ENCODE measurements at regions of chr19 and their contacts with region 1.

Region 1: DNA sequence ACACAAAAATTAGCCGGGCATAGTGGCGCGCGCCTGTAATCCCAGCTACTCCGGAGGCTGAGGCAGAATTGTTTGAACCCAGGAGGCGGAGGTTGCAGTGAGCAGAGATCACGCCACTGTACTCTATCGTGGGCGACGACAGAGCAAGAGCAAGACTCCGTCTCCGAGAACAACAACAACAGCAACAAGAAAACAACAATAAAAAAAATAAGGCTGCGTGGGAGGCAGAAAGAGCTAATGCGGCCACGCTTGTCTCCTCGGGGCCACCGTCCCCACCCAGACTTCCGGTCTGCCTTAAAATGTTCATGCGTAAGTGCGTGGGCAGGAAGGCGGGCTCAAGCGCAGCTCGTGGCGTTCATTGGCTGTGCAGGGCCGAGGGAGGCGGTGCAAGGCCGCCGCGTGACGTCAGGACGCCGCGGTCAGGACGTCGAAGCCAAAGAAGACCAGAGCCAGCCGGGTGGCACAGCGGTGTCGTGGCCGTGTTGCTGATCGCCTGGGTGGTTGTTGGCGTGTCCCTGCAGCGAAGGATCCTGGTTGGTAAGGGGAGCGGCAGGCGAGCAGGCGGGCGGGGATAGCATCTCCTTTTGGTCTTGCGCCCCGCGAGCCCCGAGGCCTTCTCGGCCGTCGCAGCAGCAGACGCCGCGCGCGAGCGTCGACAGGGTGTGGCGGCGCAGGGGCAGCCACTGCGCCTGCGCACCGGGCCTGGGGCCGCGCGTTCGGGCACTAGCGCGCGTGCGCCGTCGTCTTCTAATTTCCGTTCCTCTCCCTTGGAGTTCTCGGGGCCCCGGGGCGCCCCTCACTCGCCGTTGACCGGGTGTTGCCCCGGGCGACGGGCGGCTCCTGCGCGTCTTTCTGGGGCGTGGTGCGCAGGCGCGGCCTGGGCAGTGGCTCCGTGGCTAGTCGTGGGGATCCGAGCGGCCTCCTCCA is at the start of gene LENG8:
- DNase-seq: peak; percentile 100
- ATAC-seq: peak; percentile 93
- H3K4me3 ChIP-seq: peak within 1 kb of the TSS; percentile 71 to 91 (median 88)
- H3K4me3 Mint-ChIP-seq: peak within 1 kb of the TSS; percentile 95
- H3K27ac ChIP-seq: peak within 1 kb of the TSS; percentile 93 to 98
- H3K27ac Mint-ChIP-seq: peak within 1 kb of the TSS; percentile 100
- H3K4me1 ChIP-seq: peaks cover 31 to 33% of the 10 kb centered on the region in 2 donors
- H3K4me1 Mint-ChIP-seq: peaks cover 48% of the 10 kb centered on the region
- H3K27me3 ChIP-seq: no peaks in the 10 kb centered on the region
- H3K27me3 Mint-ChIP-seq: no peaks in the 10 kb centered on the region
- CTCF ChIP-seq: no peak
- total RNA-seq, gene LENG8: 668 and 687 TPM in 2 replicates

Region 2: DNA sequence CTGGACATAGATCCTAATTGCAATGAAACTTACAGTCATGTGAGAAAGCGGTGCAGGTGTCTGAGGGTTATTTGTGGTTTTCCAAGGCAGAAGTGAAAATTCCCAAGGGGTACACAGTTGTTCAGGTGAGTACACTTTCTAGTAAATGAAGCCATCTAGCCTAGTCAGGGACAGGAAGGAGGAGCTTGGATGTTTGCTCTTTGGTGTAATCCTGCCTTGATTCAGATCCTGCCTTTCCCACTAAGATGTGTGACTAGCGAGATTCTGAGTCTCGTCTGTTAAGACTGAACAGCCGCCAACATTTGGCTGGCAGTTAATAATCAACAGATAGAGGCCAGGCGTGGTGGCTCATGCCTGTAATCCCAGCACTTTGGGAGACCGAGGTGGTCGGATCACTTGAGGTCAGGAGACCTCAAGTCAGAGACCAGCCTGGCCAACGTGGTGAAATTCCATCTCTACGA is 245.9 kb before region 1 on chr19:
- CTCF ChIA-PET with region 1: no interaction called
- POLR2A ChIA-PET with region 1: interaction called, 4 read pairs
- intact Hi-C with region 1: loop called (anchors 2 kb)
- DNase-seq: peak; percentile 23
- ATAC-seq: no peak
- H3K4me3 ChIP-seq: no peak overlapping the region
- H3K4me3 Mint-ChIP-seq: peak overlapping the region; percentile 96
- H3K27ac ChIP-seq: no peak overlapping the region
- H3K27ac Mint-ChIP-seq: peak overlapping the region; percentile 46
- H3K4me1 ChIP-seq: peaks cover 46 to 66% of the 10 kb centered on the region in 2 donors
- H3K4me1 Mint-ChIP-seq: peaks cover 71% of the 10 kb centered on the region
- H3K27me3 ChIP-seq: no peaks in the 10 kb centered on the region
- H3K27me3 Mint-ChIP-seq: no peaks in the 10 kb centered on the region
- CTCF ChIP-seq: no peak

Measured in B cell (primary cell).